ENCODE measurements at regions of chr12 and their contacts with region 1.

Region 1: GRCh38 chr12:121773011-121773777 is 20.3 kb downstream of the RHOF start:
- DNase-seq: peak; percentile 71
- H3K4me3 Mint-ChIP-seq: no peak overlapping the region
- H3K27ac Mint-ChIP-seq: no peak overlapping the region
- H3K4me1 Mint-ChIP-seq: peaks cover 7% of the 10 kb centered on the region
- H3K27me3 Mint-ChIP-seq: no peaks in the 10 kb centered on the region

Region 2: GRCh38 chr12:121550974-121551634 is 222.1 kb before region 1 on chr12:
- intact Hi-C with region 1: loop called (anchors 1 kb)
- DNase-seq: no peak
- H3K4me3 Mint-ChIP-seq: no peak overlapping the region
- H3K27ac Mint-ChIP-seq: no peak overlapping the region
- H3K4me1 Mint-ChIP-seq: peaks cover 6% of the 10 kb centered on the region
- H3K27me3 Mint-ChIP-seq: no peaks in the 10 kb centered on the region

Region 3: GRCh38 chr12:121697098-121697698 is 76.0 kb before region 1 on chr12:
- intact Hi-C with region 1: loop called (anchors 1 kb)
- DNase-seq: peak; percentile 24
- H3K4me3 Mint-ChIP-seq: no peak overlapping the region
- H3K27ac Mint-ChIP-seq: no peak overlapping the region
- H3K4me1 Mint-ChIP-seq: no peaks in the 10 kb centered on the region
- H3K27me3 Mint-ChIP-seq: peaks cover 10% of the 10 kb centered on the region

Region 4: GRCh38 chr12:121712461-121713256 is 60.5 kb before region 1 on chr12 and contains the start of gene TMEM120B:
- intact Hi-C with region 1: loop called (anchors 1 kb)
- DNase-seq: peak; percentile 83
- H3K4me3 Mint-ChIP-seq: peak within 1 kb of the TSS; percentile 97
- H3K27ac Mint-ChIP-seq: peak within 1 kb of the TSS; percentile 91
- H3K4me1 Mint-ChIP-seq: peaks cover 28% of the 10 kb centered on the region
- H3K27me3 Mint-ChIP-seq: peaks cover 4% of the 10 kb centered on the region
- total RNA-seq, gene TMEM120B: 17.5 and 18.3 TPM in 2 replicates

Region 5: DNA sequence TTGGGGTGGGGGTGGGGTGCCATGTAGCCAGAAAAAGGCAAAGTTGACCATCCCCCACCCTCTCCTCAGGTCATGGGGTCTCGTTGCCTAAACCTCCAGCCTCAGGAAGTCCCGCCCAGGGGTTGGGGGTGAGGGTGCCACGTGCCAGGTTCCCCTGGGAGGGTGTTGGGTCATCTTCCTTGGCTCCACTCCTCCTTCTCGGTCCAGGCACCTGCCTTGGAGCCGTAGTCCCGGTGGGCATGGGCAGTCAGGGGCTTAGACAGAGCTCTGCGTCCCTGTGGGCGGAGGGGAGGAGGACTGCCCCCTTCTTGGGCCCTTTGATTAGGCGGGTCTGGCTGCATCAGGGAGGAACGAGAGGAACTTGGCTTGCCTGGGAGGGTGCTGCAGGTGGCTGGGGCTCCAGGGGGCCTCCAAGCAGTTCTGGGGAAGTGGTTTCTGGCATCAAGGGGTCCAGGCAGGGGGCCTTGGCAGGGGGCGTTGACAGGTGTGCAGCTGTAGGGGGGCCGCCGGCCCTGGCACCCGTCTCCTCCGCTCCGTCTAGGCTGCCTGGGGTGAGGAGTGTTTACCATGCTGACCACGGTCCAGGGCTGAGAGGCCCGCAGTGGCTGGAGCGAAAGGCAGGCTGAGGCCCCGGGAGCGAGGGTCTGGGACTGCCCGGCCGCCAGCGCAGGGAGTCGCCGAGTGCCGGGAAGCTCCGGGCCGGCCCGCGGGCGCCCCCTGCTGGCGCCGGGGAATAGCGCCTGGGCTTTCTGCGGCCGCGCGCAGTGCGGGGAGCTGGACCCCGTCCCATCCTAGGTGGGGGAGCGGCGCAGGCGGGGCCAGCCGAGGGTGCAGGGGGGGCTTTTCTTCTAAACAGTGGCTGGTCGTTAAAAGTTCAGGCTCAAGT is 38.5 kb after region 1 on chr12:
- intact Hi-C with region 1: loop called (anchors 1 kb)
- DNase-seq: peak; percentile 67
- H3K4me3 Mint-ChIP-seq: peak overlapping the region; percentile 85
- H3K27ac Mint-ChIP-seq: peak overlapping the region; percentile 40
- H3K4me1 Mint-ChIP-seq: peaks cover 35% of the 10 kb centered on the region
- H3K27me3 Mint-ChIP-seq: no peaks in the 10 kb centered on the region

Measured in activated T-helper 1 cell treated with anti-CD3 and anti-CD28 coated beads, Interleukin-12 subunit alpha, Interleukin-12 subunit beta, Interleukin-2, Interleukin-4 antibody, amounts not matched to agents 30 ng/mL and 10 ng/mL and 1 ng/mL, durations not matched to agents 14 hours and 24 hours and 36 hours (primary cell).